Endothelial cell of umbilical vein (primary cell): ENCODE measurements at regions of chr14 and their contacts with region 1.

Region 1: GRCh38 chr14:104137297-104138097 is 890 bp upstream of the KIF26A start:
- DNase-seq: peak; percentile 51
- H3K4me3 ChIP-seq: peak overlapping the region; percentile 48 to 87 (median 61)
- H3K27ac ChIP-seq: no peak overlapping the region
- H3K4me1 ChIP-seq: peaks cover 21% of the 10 kb centered on the region
- H3K27me3 ChIP-seq: peaks cover 21 to 23% of the 10 kb centered on the region in 2 experiments
- CTCF ChIP-seq: peak; percentile 79 to 84
- POLR2A ChIP-seq: no peak

Region 2: DNA sequence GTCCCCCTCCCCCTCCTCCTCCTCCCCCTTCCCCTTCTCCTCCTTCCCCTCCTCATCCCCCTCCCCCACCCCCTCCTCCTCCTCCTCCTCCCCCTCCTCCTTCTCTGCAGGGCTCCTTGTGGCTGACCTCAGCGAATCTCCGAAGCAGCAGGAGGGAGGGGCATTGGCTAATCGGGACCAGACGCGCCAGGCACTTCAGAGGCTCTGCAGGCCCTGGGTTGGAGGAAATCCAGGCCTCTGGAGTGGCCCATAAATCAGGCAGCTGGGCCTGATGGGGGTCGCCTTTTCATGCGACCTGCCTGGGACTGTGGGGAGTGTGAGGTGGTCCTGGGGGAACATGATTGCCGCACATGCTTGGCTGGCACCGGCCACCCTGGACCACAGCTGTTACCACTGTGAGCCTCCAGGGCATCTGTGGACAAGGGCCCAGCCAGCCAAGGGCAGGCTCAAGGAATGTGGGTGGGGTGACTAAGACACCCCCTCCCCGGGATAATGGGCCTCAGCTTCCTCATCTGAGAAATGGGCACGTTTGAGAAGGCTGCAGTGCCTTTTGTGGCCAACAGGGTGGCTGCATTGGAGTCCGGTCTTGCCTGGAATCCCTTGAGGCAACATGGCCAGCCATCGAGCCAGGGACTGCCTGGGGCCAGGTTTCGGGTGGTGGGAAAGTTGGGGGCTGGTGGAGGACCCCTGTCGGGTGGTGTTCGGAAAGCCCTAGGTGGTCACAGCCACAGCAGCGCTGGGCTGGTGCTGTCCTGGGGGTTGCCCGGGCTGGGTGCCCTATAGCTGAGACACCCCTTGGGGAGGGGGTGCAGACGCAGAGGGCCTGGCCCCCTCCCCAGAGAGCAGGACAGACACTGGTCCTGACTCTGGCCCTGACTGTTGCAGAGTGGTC is 12.9 kb after region 1 on chr14:
- CTCF ChIA-PET with region 1: interaction called, 11 read pairs
- POLR2A ChIA-PET with region 1: interaction called, 6 read pairs
- dilution Hi-C with region 1: no loop called
- intact Hi-C with region 1: no loop called
- DNase-seq: no peak
- H3K4me3 ChIP-seq: no peak overlapping the region
- H3K27ac ChIP-seq: no peak overlapping the region
- H3K4me1 ChIP-seq: peaks cover 32% of the 10 kb centered on the region
- H3K27me3 ChIP-seq: no peaks in the 10 kb centered on the region
- CTCF ChIP-seq: peak; percentile 27 to 32
- POLR2A ChIP-seq: no peak

Region 3: DNA sequence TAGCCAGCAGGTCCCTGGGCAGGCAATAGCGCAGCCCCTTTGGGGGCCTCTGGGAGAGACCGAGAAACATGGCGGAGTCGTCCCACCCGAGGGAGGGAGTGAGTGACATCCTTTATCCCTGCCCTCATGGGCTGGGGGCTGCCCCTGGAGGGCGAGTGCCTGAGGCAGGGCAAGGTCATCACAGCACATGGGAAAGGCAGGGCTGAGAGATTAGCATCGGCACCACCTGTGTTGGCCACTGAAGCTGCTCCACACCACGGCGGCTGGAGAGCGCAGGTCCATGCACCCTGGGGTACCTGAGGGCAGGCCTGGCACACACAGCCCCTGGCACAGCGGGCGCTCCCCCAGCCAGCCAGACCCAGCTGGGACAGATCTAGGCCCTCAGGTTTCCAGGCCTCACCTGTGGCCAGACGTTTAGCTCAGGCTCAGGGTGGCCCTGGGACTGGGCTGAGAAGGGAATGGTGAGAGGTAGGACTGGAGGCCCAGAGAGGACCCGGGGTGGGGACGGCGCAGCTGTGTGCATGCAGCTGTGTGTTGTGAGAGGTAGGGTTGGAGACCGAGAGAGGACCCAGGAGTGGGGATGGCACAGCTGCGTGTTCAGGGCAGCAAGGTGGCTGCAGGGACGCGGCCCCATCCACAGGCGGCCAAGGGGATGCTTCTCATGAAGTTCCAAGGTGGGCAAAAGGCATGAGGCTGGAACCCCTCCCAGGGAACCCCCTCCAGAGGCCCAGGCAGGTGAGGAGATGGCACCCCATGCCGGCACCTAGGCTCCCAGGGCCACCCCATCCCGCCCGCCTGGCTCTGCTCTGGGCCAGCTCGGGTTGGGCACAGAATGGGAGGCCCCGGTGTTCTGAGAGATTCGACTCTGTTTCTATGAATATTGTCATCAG is 75.0 kb after region 1 on chr14:
- CTCF ChIA-PET with region 1: no interaction called
- POLR2A ChIA-PET with region 1: no interaction called
- dilution Hi-C with region 1: no loop called
- intact Hi-C with region 1: no loop called
- DNase-seq: no peak
- H3K4me3 ChIP-seq: no peak overlapping the region
- H3K27ac ChIP-seq: no peak overlapping the region
- H3K4me1 ChIP-seq: no peaks in the 10 kb centered on the region
- H3K27me3 ChIP-seq: no peaks in the 10 kb centered on the region
- CTCF ChIP-seq: no peak
- POLR2A ChIP-seq: no peak

Region 4: GRCh38 chr14:104224506-104225277 is 87.2 kb after region 1 on chr14:
- CTCF ChIA-PET with region 1: interaction called, 32 read pairs
- POLR2A ChIA-PET with region 1: no interaction called
- dilution Hi-C with region 1: no loop called
- intact Hi-C with region 1: loop called (anchors 1 kb)
- DNase-seq: peak; percentile 14
- H3K4me3 ChIP-seq: no peak overlapping the region
- H3K27ac ChIP-seq: no peak overlapping the region
- H3K4me1 ChIP-seq: no peaks in the 10 kb centered on the region
- H3K27me3 ChIP-seq: no peaks in the 10 kb centered on the region
- CTCF ChIP-seq: peak; percentile 60 to 75
- POLR2A ChIP-seq: no peak

Region 5: GRCh38 chr14:104341532-104342434 is 204.3 kb after region 1 on chr14:
- CTCF ChIA-PET with region 1: interaction called, 3 read pairs
- POLR2A ChIA-PET with region 1: no interaction called
- dilution Hi-C with region 1: no loop called
- intact Hi-C with region 1: loop called (anchors 1 kb)
- DNase-seq: peak; percentile 40
- H3K4me3 ChIP-seq: no peak overlapping the region
- H3K27ac ChIP-seq: no peak overlapping the region
- H3K4me1 ChIP-seq: no peaks in the 10 kb centered on the region
- H3K27me3 ChIP-seq: peaks cover 0 to 8% of the 10 kb centered on the region in 2 experiments
- CTCF ChIP-seq: peak; percentile 42 to 65
- POLR2A ChIP-seq: no peak

Region 6: GRCh38 chr14:104510794-104511611 is 373.5 kb after region 1 on chr14:
- CTCF ChIA-PET with region 1: interaction called, 15 read pairs
- POLR2A ChIA-PET with region 1: no interaction called
- dilution Hi-C with region 1: no loop called
- intact Hi-C with region 1: no loop called
- DNase-seq: no peak
- H3K4me3 ChIP-seq: no peak overlapping the region
- H3K27ac ChIP-seq: no peak overlapping the region
- H3K4me1 ChIP-seq: no peaks in the 10 kb centered on the region
- H3K27me3 ChIP-seq: no peaks in the 10 kb centered on the region
- CTCF ChIP-seq: no peak
- POLR2A ChIP-seq: no peak

Region 7: DNA sequence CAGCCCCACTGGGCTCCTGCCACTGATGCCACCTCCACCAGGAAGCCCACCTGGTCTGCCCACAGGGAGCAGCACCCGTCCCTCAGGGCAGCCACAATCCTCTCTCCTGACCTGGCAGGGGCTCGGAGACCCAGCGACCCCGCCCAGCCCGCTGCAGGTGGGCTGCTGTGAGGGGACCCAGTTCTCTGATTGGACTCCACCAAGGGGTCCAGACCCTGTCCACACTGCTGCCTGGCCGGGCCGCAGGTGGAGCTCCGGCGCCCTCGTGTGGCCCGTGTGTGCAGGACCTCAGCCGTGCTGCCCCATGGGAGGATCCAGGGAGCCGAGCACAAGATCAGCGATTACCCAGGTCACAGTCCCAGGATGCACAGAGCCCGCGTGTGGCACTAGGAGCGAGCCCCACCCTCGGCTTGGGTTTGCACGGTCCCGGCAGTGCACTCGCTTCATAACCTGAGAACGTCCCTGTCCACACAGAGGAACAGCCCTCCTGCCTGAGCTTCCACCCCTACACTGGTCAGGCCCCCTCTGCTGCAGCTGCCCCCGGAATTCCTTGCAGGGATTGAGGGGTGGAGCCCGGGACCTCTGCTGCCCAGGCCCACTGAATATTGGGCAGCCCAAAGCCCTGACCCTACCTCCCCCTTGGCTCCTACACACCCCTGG is 502.5 kb after region 1 on chr14:
- CTCF ChIA-PET with region 1: interaction called, 5 read pairs
- POLR2A ChIA-PET with region 1: no interaction called
- dilution Hi-C with region 1: no loop called
- intact Hi-C with region 1: loop called (anchors 1 kb)
- DNase-seq: peak; percentile 55
- H3K4me3 ChIP-seq: no peak overlapping the region
- H3K27ac ChIP-seq: no peak overlapping the region
- H3K4me1 ChIP-seq: no peaks in the 10 kb centered on the region
- H3K27me3 ChIP-seq: peaks cover 0 to under 1% of the 10 kb centered on the region in 2 experiments
- CTCF ChIP-seq: peak; percentile 94 to 99
- POLR2A ChIP-seq: no peak